Gastrocnemius medialis (tissue), 4 donors: ENCODE measurements at regions of chr17 and their contacts with region 1.

Region 1: DNA sequence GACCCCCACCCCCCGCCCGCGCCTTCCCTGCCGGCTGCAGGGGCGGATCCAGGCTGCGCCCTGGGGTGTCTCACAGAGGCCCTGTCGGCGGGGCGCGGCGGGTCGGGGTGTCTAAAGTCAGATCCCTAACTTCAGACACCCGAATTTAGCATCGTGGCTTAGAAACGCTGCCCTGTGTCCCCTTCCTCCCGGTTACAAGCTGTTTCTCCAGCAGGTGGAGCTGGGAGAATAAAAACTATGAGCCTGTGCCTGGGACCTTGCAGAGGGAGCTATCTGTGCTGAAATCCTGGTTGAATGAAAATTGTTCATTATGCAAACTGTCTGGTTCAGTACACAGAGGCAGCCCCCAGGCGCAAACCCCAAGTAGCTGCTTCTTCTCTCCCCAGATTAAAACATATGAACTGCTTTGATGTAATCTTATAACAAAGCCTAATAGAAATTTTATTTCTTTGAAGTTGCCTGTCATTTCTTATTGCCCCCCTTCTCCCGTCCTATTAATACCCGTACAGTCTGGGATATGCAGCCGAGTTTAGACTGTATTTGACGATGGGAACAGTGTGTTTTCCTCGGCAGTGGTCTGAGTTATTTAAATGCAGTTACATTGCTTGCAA is 79.0 kb downstream of the RPA1 start:
- DNase-seq: peak; percentile 41 to 55
- ATAC-seq: peak; percentile 78 to 85
- H3K4me3 ChIP-seq: peak overlapping the region; percentile 18 to 46 (median 30)
- H3K27ac ChIP-seq: no peak overlapping the region
- H3K4me1 ChIP-seq: peaks cover 30 to 32% of the 10 kb centered on the region in 2 donors
- H3K27me3 ChIP-seq: peaks cover 6 to 13% (median 8%) of the 10 kb centered on the region in 3 donors
- CTCF ChIP-seq: peak; percentile 63 to 81 (median 76)
- POLR2A ChIP-seq: no peak

Region 2: GRCh38 chr17:2002767-2003329 is 94.0 kb after region 1 on chr17:
- in situ Hi-C with region 1: no loop called
- intact Hi-C with region 1: loop called (anchors 2 kb)
- DNase-seq: peak in 1 of 2 donors; percentile 54
- ATAC-seq: peak in 1 of 2 donors; percentile 12
- H3K4me3 ChIP-seq: no peak overlapping the region
- H3K27ac ChIP-seq: peak overlapping the region; percentile 64 to 85 (median 76)
- H3K4me1 ChIP-seq: peaks cover 39 to 46% of the 10 kb centered on the region in 2 donors
- H3K27me3 ChIP-seq: no peaks in the 10 kb centered on the region
- CTCF ChIP-seq: no peak
- POLR2A ChIP-seq: no peak

Region 3: GRCh38 chr17:2029911-2030778 is 121.3 kb after region 1 on chr17 and contains the start of gene DPH1:
- in situ Hi-C with region 1: loop called (anchors 5 to 10 kb)
- intact Hi-C with region 1: loop called (anchors 1 kb)
- DNase-seq: peak; percentile 85 to 90
- ATAC-seq: peak; percentile 81 to 83
- H3K4me3 ChIP-seq: peak within 1 kb of the TSS; percentile 75 to 100 (median 91)
- H3K27ac ChIP-seq: peak within 1 kb of the TSS; percentile 87 to 98 (median 96)
- H3K4me1 ChIP-seq: peaks cover 25 to 29% of the 10 kb centered on the region in 2 donors
- H3K27me3 ChIP-seq: no peaks in the 10 kb centered on the region
- CTCF ChIP-seq: peak in 2 of 5 experiments; percentile 10 to 41
- POLR2A ChIP-seq: peak; percentile 78 to 88
- total RNA-seq, gene DPH1: 47.2 to 59.9 (median 57.7) TPM

Region 4: GRCh38 chr17:2041561-2042366 is 133.0 kb after region 1 on chr17 and contains the start of gene OVCA2:
- in situ Hi-C with region 1: no loop called
- intact Hi-C with region 1: loop called (anchors 1 kb)
- DNase-seq: peak; percentile 85 to 87
- ATAC-seq: peak; percentile 88 to 93
- H3K4me3 ChIP-seq: peak within 1 kb of the TSS; percentile 72 to 100 (median 80)
- H3K27ac ChIP-seq: peak within 1 kb of the TSS; percentile 85 to 97 (median 92)
- H3K4me1 ChIP-seq: peaks cover 26% of the 10 kb centered on the region in 2 donors
- H3K27me3 ChIP-seq: no peaks in the 10 kb centered on the region
- CTCF ChIP-seq: peak; percentile 48 to 69 (median 63)
- POLR2A ChIP-seq: peak; percentile 55 to 67
- total RNA-seq, gene OVCA2: 12.6 to 50.2 (median 34.4) TPM

Region 5: GRCh38 chr17:2259769-2260536 is 351.1 kb after region 1 on chr17:
- in situ Hi-C with region 1: loop called in 2 of 4 experiments (anchors 25 kb)
- intact Hi-C with region 1: no loop called
- DNase-seq: no peak
- ATAC-seq: no peak
- H3K4me3 ChIP-seq: no peak overlapping the region
- H3K27ac ChIP-seq: no peak overlapping the region
- H3K4me1 ChIP-seq: peaks cover 10 to 22% of the 10 kb centered on the region in 2 donors
- H3K27me3 ChIP-seq: no peaks in the 10 kb centered on the region
- CTCF ChIP-seq: no peak
- POLR2A ChIP-seq: no peak

Region 6: GRCh38 chr17:2282297-2282873 is 373.6 kb after region 1 on chr17:
- in situ Hi-C with region 1: no loop called
- intact Hi-C with region 1: loop called (anchors 10 kb)
- DNase-seq: no peak
- ATAC-seq: peak; percentile 52 to 62
- H3K4me3 ChIP-seq: no peak overlapping the region
- H3K27ac ChIP-seq: no peak overlapping the region
- H3K4me1 ChIP-seq: no peaks in the 10 kb centered on the region
- H3K27me3 ChIP-seq: no peaks in the 10 kb centered on the region
- CTCF ChIP-seq: peak in 4 of 5 experiments; percentile 42 to 59 (median 50)
- POLR2A ChIP-seq: no peak